Right ventricle myocardium inferior (tissue), 1 donor: ENCODE measurements at regions of chr16 and their contacts with region 1.

Region 1: GRCh38 chr16:57416122-57416509 is 11.5 kb downstream of the CCL17 start:
- DNase-seq: no peak
- ATAC-seq: no peak

Region 2: GRCh38 chr16:57341441-57342303 is 74.4 kb before region 1 on chr16:
- intact Hi-C with region 1: no loop called
- DNase-seq: no peak
- ATAC-seq: no peak

Region 3: DNA sequence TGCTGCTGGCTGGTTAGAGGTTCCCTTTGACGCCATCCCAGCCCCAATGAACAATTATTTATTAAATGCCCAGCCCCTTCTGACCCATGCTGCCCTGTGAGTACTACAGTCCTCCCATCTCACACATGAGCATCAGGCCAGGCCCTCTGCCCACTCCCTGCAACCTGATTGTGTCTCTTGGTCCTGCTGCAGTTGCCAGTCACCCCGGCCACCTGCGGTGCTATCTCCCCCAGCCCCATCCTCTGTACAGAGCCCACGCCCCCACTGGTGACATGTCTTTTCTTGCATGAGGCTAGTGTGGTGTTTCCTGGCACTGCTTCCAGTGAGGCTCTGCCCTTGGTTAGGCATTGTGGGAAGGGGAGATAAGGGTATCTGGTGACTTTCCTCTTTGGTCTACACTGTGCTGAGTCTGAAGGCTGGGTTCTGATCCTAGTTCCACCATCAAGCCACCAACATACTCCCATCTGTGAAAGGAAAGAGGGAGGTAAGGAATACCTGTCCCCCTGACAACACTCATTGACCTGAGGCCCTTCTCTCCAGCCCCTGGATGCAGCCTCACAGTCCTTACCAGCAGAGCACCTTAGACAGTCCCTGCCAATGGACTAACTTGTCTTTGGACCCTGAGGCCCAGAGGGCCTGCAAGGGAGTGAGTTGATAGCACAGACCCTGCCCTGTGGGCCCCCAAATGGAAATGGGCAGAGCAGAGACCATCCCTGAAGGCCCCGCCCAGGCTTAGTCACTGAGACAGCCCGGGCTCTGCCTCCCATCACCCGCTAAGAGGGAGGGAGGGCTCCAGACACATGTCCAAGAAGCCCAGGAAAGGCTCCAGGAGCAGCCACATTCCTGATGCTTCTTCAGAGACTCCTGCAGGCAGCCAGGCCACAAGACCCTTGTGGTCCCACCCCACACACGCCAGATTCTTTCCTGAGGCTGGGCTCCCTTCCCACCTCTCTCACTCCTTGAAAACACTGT is 32.6 kb before region 1 on chr16:
- intact Hi-C with region 1: loop called (anchors 5 kb)
- DNase-seq: no peak
- ATAC-seq: no peak